ENCODE measurements at regions of chr1 and their contacts with region 1.

Region 1: DNA sequence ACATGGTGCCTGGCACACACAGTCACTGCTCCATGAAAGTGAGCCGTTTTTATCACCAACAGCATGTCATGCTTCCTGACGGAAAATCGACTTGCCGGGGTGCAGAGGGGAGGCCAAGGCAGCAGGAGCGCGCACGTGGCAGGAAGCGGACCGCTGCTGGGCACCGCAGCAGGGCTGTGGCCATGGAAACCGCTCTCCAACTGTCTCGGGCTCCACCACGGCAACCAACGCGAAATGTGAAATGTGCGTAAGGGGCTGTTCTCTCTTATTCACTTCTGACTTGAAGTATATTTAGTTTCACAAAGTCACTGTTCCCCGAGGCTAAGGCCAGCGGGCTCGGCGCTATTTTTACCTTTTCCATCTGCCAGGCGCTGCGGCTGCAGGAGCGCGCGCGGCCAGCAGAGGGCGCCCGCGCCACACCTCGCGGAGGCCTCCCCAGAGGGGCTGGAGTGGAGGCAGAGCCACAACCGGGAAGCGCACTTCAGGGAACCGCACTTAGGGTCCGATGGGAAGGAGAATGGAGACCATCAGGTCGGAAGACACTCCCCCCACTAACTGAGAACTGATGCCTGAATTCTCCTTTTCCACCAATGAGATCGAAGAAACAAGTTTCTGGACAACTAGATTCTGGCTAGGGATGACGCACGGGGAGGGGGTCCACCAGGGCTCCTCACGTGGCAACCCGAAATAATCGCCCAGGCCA is 19.7 kb downstream of the RCC2 start:
- H3K4me3 Mint-ChIP-seq: no peak overlapping the region
- H3K27ac Mint-ChIP-seq: no peak overlapping the region
- H3K4me1 Mint-ChIP-seq: peaks cover 13% of the 10 kb centered on the region
- H3K27me3 Mint-ChIP-seq: no peaks in the 10 kb centered on the region

Region 2: DNA sequence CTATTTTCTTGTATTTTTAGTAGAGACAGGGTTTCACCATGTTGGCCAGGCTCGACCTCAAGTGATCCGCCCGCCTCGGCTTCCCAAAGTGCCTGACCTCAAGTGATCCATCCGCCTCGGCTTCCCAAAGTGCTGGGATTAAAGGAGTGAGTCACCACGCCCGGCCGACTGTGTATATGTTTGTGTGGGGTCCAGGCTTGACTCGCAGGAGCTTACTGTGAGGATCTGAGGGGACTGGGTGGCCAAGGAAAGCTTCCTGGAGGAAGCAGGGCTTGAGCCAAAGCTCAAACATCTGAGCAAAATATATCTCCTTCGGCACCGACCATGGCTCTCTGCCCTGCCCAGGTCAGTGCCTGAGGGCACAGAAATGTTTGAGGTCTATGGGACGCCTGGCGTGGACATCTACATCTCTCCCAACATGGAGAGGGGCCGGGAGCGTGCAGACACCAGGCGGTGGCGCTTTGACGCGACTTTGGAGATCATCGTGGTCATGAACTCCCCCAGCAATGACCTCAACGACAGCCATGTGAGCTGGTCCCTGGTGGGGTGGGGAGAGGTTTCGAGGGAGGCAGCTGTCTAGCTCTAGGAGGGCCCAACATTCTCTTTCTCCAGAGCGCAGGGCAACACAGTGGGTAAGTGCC is 160.4 kb before region 1 on chr1:
- intact Hi-C with region 1: no loop called
- H3K4me3 Mint-ChIP-seq: no peak overlapping the region
- H3K27ac Mint-ChIP-seq: no peak overlapping the region
- H3K4me1 Mint-ChIP-seq: no peaks in the 10 kb centered on the region
- H3K27me3 Mint-ChIP-seq: peaks cover 10% of the 10 kb centered on the region

Region 3: DNA sequence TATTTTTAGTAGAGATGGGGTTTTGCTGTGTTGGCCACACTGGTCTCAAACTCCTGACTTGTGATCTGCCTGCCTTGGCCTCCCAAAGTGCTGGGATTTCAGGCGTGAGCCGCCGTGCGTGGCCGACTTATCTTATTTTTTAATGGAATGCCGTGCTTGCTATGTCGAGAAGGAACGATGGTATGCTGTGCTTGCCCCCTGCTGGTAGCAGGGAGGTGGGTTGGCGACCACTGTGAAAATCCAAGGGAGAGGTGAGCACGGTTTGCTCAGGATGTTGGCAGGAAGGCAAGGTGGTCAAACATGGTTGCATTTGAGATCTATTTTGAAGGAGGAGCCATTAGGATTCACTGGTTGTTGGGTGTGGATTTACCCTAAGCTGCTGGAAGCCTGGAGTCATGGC is 65.5 kb after region 1 on chr1:
- intact Hi-C with region 1: loop called (anchors 5 kb)
- H3K4me3 Mint-ChIP-seq: no peak overlapping the region
- H3K27ac Mint-ChIP-seq: no peak overlapping the region
- H3K4me1 Mint-ChIP-seq: peaks cover 5% of the 10 kb centered on the region
- H3K27me3 Mint-ChIP-seq: peaks cover 12% of the 10 kb centered on the region

Region 4: GRCh38 chr1:17742583-17742982 is 322.8 kb after region 1 on chr1:
- intact Hi-C with region 1: no loop called
- H3K4me3 Mint-ChIP-seq: no peak overlapping the region
- H3K27ac Mint-ChIP-seq: no peak overlapping the region
- H3K4me1 Mint-ChIP-seq: no peaks in the 10 kb centered on the region
- H3K27me3 Mint-ChIP-seq: peaks cover 26% of the 10 kb centered on the region

Region 5: GRCh38 chr1:18703041-18703641 is 1283.4 kb after region 1 on chr1:
- intact Hi-C with region 1: no loop called
- H3K4me3 Mint-ChIP-seq: no peak overlapping the region
- H3K27ac Mint-ChIP-seq: no peak overlapping the region
- H3K4me1 Mint-ChIP-seq: no peaks in the 10 kb centered on the region
- H3K27me3 Mint-ChIP-seq: peaks cover 26% of the 10 kb centered on the region

Measured in dendritic cell treated with granulocyte-macrophage colony-stimulating factor and Interleukin-4, amounts not matched to agents 40 ng/mL and 50 ng/mL, for 4 days (primary cell).